HEK293 (cell line): ENCODE measurements at regions of chr6 and their contacts with region 1.

Region 1: DNA sequence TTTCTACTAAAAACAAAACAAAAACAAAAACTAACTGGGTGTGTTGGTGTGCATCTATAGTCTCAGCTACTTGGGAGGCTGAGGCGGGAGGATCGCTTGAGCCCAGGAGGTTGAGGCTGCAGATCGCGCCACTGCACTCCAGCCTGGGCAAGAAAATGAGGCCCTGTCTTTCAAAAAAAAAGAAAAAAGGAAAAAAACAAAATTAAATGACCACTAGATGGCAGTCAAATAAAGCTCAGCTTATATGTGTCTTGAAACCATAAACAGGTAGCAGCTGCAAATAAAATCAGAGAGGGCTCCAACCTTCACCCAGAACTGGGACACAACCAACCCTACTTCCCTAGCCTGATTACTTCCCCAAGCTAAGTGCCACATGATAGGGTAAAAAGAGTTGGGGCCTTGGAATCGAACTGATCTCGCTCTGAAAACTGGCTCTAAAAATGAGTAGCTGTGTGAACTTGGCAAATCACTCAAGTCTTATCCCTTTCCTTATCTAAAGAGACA is 67.1 kb upstream of the ADGRF4 start:
- H3K4me3 ChIP-seq: no peak overlapping the region
- H3K27ac ChIP-seq: no peak overlapping the region
- H3K4me1 ChIP-seq: peaks cover 23% of the 10 kb centered on the region
- CTCF ChIP-seq: peak; percentile 75; the same call in 1 of the 2 replicates

Region 2: DNA sequence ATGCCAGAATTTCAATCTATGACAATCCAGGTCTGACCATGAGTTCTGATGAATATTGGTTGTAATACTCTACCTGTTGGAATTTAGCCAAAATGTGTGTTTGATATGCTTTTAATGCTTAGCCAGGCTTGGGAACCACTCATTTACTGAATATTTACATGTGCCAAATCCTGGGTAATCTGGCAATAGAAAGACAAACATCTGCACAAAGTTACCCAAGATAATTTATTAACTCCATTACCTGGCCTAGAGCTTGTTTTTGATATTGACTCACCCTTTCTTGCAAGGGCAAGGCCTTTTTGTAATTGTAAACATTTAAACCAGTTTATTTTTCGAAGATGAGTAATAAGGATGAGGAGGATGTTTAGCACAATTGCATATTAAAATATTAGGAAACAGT is 167.3 kb before region 1 on chr6:
- CTCF ChIA-PET with region 1: no interaction called
- POLR2A ChIA-PET with region 1: no interaction called
- H3K4me3 ChIP-seq: no peak overlapping the region
- H3K27ac ChIP-seq: no peak overlapping the region
- H3K4me1 ChIP-seq: no peaks in the 10 kb centered on the region
- CTCF ChIP-seq: no peak

Region 3: GRCh38 chr6:47477497-47478232 is 153.7 kb before region 1 on chr6 and contains the start of gene CD2AP:
- CTCF ChIA-PET with region 1: interaction called, 3 read pairs
- POLR2A ChIA-PET with region 1: interaction called, 12 read pairs
- H3K4me3 ChIP-seq: peak within 1 kb of the TSS; percentile 86
- H3K27ac ChIP-seq: peak within 1 kb of the TSS; percentile 99
- H3K4me1 ChIP-seq: peaks cover 9% of the 10 kb centered on the region
- CTCF ChIP-seq: peak; percentile 67

Region 4: DNA sequence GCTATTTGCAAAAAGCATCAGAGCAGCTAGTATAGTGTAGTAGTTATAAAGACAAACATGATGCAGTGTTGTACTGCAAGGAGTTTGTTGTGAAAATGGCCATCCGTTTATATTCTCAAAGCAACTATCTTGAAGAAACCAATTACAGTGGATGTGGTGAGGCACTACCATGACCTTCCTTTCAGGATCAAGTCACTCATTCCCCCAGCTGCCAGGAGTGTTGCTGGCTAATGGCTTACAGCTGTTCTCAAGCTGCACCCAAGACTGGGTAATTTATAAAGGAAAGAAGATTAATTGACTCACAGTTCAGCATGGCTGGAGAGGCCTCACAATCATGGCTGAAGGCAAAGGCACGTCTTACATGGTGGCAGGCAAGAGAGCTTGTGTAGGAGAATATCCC is 96.1 kb after region 1 on chr6:
- CTCF ChIA-PET with region 1: interaction called, 122 read pairs
- POLR2A ChIA-PET with region 1: no interaction called
- H3K4me3 ChIP-seq: no peak overlapping the region
- H3K27ac ChIP-seq: no peak overlapping the region
- H3K4me1 ChIP-seq: peaks cover 9% of the 10 kb centered on the region
- CTCF ChIP-seq: no peak

Region 5: GRCh38 chr6:47741807-47742206 is 110.5 kb after region 1 on chr6:
- CTCF ChIA-PET with region 1: interaction called, 13 read pairs
- POLR2A ChIA-PET with region 1: no interaction called
- H3K4me3 ChIP-seq: no peak overlapping the region
- H3K27ac ChIP-seq: no peak overlapping the region
- H3K4me1 ChIP-seq: peaks cover 7% of the 10 kb centered on the region; the same call in 1 of the 2 replicates
- CTCF ChIP-seq: no peak

Region 6: GRCh38 chr6:47780510-47781356 is 149.4 kb after region 1 on chr6:
- CTCF ChIA-PET with region 1: interaction called, 117 read pairs
- POLR2A ChIA-PET with region 1: no interaction called
- H3K4me3 ChIP-seq: peak overlapping the region; percentile 23; the same call in 1 of the 2 replicates
- H3K27ac ChIP-seq: no peak overlapping the region
- H3K4me1 ChIP-seq: no peaks in the 10 kb centered on the region
- CTCF ChIP-seq: peak; percentile 78